Activated CD8-positive, alpha-beta memory T cell treated with anti-CD3 and anti-CD28 coated beads, Interleukin-2, amount 10 ng/mL, durations not matched to agents 7 days and 5 days (primary cell): ENCODE measurements at regions of chr17 and their contacts with region 1.

Region 1: DNA sequence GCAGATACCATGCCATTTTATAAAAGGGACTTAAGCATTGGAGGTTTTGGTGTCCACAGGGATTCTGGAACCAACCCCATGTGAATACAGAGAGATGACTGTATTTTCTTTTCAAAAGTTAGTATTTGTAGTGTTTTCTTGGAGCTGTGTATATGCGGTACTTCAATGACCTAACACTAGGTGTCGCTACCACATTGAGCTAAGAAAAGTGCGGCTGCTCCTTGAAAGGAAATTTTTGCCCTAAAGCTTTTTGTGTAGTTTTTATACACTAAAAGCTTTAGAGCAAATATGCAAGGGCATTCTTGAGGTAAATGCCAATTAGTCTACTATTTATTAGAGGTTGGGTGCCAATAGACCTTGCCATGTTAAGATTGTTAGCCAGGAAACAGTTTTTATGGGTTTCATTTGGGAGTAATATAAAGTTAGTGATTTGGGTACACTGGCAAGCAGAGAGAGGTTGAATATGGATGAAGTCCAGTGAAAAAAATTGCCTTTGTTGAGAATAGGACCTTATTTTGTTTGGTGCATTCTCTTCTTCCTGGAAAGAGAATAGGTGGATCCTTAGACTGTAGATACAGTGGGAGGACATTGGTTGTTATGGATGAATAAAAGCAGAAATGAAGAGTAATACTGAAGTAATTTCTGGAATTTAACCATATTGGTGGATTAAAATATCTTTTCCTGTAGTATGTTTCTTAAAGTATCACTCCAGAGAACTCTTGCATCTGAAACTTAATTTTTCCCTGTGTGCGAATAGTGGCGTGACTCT is 43.3 kb downstream of the BCAS3 start:
- DNase-seq: peak; percentile 55
- ATAC-seq: no peak
- H3K4me3 Mint-ChIP-seq: no peak overlapping the region
- H3K27ac Mint-ChIP-seq: no peak overlapping the region
- H3K4me1 Mint-ChIP-seq: no peaks in the 10 kb centered on the region
- H3K27me3 Mint-ChIP-seq: no peaks in the 10 kb centered on the region

Region 2: DNA sequence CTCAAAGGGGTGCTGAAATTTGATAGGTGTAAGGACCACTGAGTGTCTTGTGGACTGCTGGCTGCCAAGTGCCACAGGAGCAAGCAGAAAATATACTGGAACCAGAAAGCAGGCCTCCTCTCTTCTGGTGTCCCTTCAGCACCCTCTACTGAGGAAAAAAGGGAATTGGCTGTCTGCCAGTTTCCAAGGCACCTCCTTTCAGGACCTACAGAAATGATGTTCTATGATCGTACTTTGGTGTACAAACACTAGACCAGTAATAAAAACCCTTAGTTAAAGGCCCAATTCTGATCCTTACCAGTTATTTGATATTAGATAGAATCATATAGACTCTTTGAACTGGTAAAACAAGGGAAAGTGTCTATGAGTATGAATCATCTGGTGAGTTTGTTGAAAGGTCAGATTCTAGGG is 79.1 kb before region 1 on chr17:
- CTCF ChIA-PET with region 1: no interaction called
- DNase-seq: peak; percentile 69
- ATAC-seq: peak; percentile 65
- H3K4me3 Mint-ChIP-seq: no peak overlapping the region
- H3K27ac Mint-ChIP-seq: no peak overlapping the region
- H3K4me1 Mint-ChIP-seq: peaks cover 11% of the 10 kb centered on the region
- H3K27me3 Mint-ChIP-seq: no peaks in the 10 kb centered on the region

Region 3: DNA sequence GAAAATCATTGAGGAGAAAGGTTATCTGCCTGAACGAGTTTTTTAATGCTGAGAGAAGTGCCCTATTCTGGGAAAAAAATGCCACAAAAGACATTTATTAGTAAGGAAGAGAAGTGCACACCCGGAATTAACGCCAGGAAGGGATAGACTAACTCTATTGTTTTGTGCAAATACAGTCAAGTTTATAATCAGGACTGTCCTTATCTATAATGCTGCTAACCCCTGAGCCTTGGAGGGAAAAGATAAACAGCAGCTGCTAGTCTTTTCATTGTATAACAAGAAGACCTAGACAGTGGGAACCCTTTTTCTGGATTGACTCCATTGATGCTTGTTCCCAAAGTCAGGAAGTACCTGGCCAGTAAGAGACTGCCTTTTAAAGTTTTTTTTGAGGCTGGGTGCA is 16.8 kb before region 1 on chr17:
- CTCF ChIA-PET with region 1: interaction called, 26 read pairs
- DNase-seq: no peak
- ATAC-seq: no peak
- H3K4me3 Mint-ChIP-seq: no peak overlapping the region
- H3K27ac Mint-ChIP-seq: no peak overlapping the region
- H3K4me1 Mint-ChIP-seq: no peaks in the 10 kb centered on the region
- H3K27me3 Mint-ChIP-seq: no peaks in the 10 kb centered on the region